ENCODE measurements at regions of chr13 and their contacts with region 1.

Region 1: GRCh38 chr13:100630555-100630954 is 42.0 kb upstream of the GGACT start:
- DNase-seq: peak; percentile 40
- H3K4me3 ChIP-seq: no peak overlapping the region
- H3K27ac ChIP-seq: no peak overlapping the region
- H3K4me1 ChIP-seq: peaks cover under 1% of the 10 kb centered on the region
- H3K27me3 ChIP-seq: no peaks in the 10 kb centered on the region
- CTCF ChIP-seq: peak in 1 of 2 donors; percentile 3
- POLR2A ChIP-seq: no peak

Region 2: GRCh38 chr13:100138859-100139491 is 491.6 kb before region 1 on chr13:
- CTCF ChIA-PET with region 1: no interaction called
- POLR2A ChIA-PET with region 1: no interaction called
- dilution Hi-C with region 1: no loop called
- intact Hi-C with region 1: no loop called
- DNase-seq: peak; percentile 35
- H3K4me3 ChIP-seq: no peak overlapping the region
- H3K27ac ChIP-seq: no peak overlapping the region
- H3K4me1 ChIP-seq: no peaks in the 10 kb centered on the region
- H3K27me3 ChIP-seq: no peaks in the 10 kb centered on the region
- CTCF ChIP-seq: no peak
- POLR2A ChIP-seq: no peak

Region 3: GRCh38 chr13:100658363-100658762 is 27.8 kb after region 1 on chr13:
- CTCF ChIA-PET with region 1: interaction called, 4 read pairs
- POLR2A ChIA-PET with region 1: no interaction called
- dilution Hi-C with region 1: no loop called
- intact Hi-C with region 1: loop called (anchors 1 kb)
- DNase-seq: no peak
- H3K4me3 ChIP-seq: no peak overlapping the region
- H3K27ac ChIP-seq: no peak overlapping the region
- H3K4me1 ChIP-seq: peaks cover 5% of the 10 kb centered on the region
- H3K27me3 ChIP-seq: no peaks in the 10 kb centered on the region
- CTCF ChIP-seq: no peak
- POLR2A ChIP-seq: no peak

Measured in endothelial cell of umbilical vein (primary cell).